ENCODE measurements at regions of chr17 and their contacts with region 1.

Region 1: DNA sequence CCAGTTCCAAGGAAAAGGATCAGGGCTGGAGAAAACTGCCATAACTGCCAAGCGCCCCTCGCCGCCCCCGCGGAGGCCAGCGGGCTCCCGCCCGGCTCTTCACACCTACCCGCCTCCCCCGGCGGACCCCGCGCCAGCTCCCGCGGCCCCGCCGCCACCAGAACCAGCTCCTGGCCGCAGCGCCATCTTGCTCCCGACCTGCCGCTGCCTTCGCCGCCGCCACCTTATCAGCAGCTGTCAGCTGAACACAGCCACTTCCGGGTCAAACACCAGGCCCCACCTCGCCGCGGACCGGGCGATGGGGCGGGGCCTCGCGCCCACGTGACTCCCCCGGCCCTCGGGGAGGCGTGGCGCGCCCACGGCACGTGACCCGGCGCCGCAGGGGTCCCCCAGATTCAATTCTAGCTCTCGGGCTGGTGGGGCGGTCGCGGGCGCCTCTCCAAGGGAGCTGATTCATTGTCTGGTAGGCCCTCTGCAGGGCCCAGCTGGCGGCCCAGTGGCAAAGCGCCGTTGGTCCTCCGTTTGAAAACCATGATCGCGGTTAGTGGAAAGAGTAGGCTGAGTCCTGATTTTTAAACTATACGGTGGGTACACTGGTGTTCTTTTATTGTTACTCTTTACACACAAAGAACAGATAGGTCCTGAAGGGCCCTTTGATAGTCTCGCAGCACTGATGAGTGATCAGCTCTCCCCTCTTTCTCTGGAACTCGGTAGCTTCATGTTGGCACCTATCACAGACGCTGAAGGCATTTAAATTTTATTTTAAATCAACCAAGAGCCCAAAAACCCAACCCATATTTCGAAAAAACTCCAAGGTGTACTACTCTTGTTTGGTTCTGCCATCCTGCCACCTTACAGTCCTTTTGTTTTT is at the start of gene SYNRG:
- DNase-seq: peak; percentile 89 to 99
- H3K4me3 ChIP-seq: peak within 1 kb of the TSS; percentile 69 to 96
- H3K27ac ChIP-seq: peak within 1 kb of the TSS; percentile 82 to 89
- H3K4me1 ChIP-seq: peaks cover 0 to 9% of the 10 kb centered on the region in 2 donors
- H3K27me3 ChIP-seq: no peaks in the 10 kb centered on the region
- CTCF ChIP-seq: peak; percentile 32 to 36 (median 35)
- total RNA-seq, gene SYNRG: 47.1 TPM

Region 2: DNA sequence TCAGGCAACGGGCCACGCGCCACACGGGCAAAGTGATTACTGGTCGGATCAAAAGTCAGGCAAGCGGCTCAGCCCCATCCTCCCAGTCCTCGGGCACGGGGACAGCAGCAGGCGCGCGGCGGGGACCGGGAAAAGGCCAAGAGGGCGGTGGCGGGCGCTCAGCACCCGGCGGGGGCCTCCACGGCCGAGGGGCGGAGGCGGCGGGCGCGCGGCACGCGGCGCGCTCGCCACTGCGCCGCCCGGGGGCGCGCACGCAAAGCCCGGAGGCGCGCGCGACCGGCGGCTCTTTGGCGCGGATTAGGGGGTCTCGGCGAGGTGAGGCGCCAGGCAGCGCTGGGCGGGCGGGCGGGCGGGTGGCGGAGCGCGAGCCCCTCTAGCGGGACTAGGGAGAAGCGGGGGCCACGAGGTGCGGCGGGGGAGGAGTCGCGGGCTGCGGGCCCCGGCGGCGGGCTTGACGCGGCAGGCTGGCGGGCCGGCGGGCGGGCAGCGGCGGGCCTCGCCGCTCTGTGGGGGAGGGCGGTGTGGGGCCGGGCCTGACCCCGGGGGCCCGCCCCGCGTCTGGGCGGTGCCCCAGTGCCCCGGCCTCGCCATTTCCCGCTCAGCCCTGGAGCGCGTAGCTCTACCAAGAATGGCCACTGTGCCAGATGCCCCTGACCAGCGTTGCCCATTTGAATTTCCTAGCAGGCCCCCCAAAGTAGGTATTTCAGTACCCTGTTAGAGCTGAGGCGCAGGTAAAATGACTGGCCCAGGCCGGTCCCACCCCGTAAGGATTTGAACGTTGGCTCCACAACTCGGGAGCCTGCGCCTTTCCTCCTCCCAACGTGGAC is 202.6 kb before region 1 on chr17 and contains the starts of genes ACACA and TADA2A:
- intact Hi-C with region 1: loop called (anchors 2 kb)
- DNase-seq: peak; percentile 22 to 88
- H3K4me3 ChIP-seq: peak within 1 kb of the TSS; percentile 72 to 95
- H3K27ac ChIP-seq: peak within 1 kb of the TSS; percentile 90 to 94
- H3K4me1 ChIP-seq: peaks cover 0 to 16% of the 10 kb centered on the region in 2 donors
- H3K27me3 ChIP-seq: no peaks in the 10 kb centered on the region
- CTCF ChIP-seq: peak in 1 of 3 experiments; percentile 22
- total RNA-seq, gene ACACA: 69.0 TPM
- total RNA-seq, gene TADA2A: 7.7 TPM

Region 3: DNA sequence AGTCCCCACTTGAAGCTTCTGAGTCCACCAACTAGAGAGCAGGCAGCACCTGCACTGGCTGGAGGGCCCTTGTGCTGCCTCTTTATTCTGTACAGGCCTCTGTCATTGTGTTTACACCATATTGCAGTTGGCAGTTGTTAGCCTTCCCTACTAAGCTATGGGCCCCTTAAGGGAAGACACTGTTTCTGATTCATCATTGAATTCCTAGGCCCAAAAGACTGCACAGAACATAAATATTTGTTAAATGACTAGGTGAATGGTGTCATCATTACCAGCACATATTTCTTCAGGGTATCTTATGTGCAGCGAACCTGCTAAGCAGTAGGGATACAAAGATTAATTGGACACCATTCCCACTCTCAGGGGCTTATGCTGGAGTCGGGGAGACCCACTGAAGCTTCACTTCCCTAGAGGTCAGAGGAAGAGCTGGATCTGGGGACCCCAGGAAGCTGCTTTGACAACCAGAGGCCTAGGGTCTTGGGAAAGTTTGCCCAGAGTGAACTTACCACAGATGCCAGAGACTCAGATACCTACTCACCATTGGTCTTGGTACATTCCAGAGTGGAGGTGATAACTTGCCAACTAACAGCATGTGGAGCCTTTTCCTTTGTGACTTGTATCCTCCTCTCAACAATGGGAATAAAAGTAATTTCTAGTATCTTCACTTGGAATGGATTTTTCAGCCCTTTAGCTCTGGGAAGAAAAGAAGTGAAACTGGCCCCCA is 62.6 kb after region 1 on chr17:
- intact Hi-C with region 1: no loop called
- DNase-seq: no peak
- H3K4me3 ChIP-seq: no peak overlapping the region
- H3K27ac ChIP-seq: no peak overlapping the region
- H3K4me1 ChIP-seq: no peaks in the 10 kb centered on the region
- H3K27me3 ChIP-seq: no peaks in the 10 kb centered on the region
- CTCF ChIP-seq: no peak

Region 4: GRCh38 chr17:37770631-37771518 is 161.5 kb after region 1 on chr17:
- intact Hi-C with region 1: no loop called
- DNase-seq: no peak
- H3K4me3 ChIP-seq: no peak overlapping the region
- H3K27ac ChIP-seq: no peak overlapping the region
- H3K4me1 ChIP-seq: no peaks in the 10 kb centered on the region
- H3K27me3 ChIP-seq: no peaks in the 10 kb centered on the region
- CTCF ChIP-seq: peak in 1 of 3 experiments; percentile 41